ENCODE measurements at regions of chr1 and their contacts with region 1.

Region 1: DNA sequence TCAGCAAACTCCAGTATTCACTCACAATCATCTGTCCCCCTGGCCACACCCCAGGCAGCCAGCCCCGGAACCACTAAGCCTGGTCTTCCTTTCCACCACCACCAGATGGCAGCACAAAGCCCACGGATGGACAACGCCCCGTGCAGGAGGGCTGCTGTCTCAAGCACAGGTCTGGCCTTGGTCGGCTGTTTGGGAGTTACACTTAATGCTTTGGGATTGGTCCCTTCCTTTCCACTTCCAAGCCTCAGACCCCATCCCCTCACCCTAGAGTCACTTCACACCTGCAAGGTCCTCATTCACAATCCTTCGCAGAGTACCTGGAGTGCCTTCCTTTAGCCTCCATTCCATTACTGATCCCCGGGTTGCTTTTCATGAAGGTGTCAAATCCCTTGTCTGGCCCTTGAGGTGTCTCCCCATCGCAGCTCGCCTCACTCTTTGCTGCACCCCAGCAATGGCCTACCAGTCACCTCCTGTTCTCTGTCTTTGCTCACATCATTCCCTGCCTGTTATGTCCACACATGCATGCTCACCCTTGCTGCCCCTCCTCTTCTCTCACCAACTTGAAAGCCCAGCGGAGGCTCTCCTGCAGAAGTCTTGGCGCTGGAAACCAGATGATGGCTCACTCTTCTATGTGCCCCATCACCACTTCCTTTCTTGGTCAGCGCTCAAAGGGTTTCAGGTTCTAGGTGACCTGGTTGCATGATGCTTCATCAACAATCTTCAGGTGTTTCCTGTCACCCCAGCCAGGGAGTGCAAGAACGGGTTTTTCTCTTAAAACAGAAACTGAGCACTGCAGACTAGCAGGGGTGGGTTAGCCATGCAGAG is 24.9 kb upstream of the KCNA2 start:
- DNase-seq: peak; percentile 65 to 88 (median 83)
- ATAC-seq: peak; percentile 66 to 87 (median 84)
- H3K4me3 ChIP-seq: no peak overlapping the region
- H3K27ac ChIP-seq: no peak overlapping the region
- H3K4me1 ChIP-seq: peaks cover 0 to 9% (median 0%) of the 10 kb centered on the region in 3 donors
- H3K27me3 ChIP-seq: no peaks in the 10 kb centered on the region
- CTCF ChIP-seq: peak; percentile 76 to 86 (median 81)

Region 2: GRCh38 chr1:110686188-110686587 is 55.1 kb after region 1 on chr1:
- intact Hi-C with region 1: no loop called
- DNase-seq: no peak
- ATAC-seq: no peak
- H3K4me3 ChIP-seq: no peak overlapping the region
- H3K27ac ChIP-seq: no peak overlapping the region
- H3K4me1 ChIP-seq: no peaks in the 10 kb centered on the region
- H3K27me3 ChIP-seq: peaks cover 0 to 4% (median 2%) of the 10 kb centered on the region in 4 donors
- CTCF ChIP-seq: no peak

Region 3: GRCh38 chr1:110766025-110766647 is 135.1 kb after region 1 on chr1:
- intact Hi-C with region 1: loop called (anchors 5 to 10 kb)
- DNase-seq: no peak
- ATAC-seq: peak in 3 of 4 donors; percentile 80 to 87 (median 83)
- H3K4me3 ChIP-seq: no peak overlapping the region
- H3K27ac ChIP-seq: no peak overlapping the region
- H3K4me1 ChIP-seq: no peaks in the 10 kb centered on the region
- H3K27me3 ChIP-seq: peaks cover 0 to 9% (median 0%) of the 10 kb centered on the region in 4 donors
- CTCF ChIP-seq: peak; percentile 47 to 85 (median 68)

Region 4: GRCh38 chr1:110780600-110781484 is 149.8 kb after region 1 on chr1:
- intact Hi-C with region 1: loop called in 1 of 3 experiments (anchors 5 kb)
- DNase-seq: peak in 5 of 6 donors; percentile 15 to 74 (median 46)
- ATAC-seq: peak; percentile 50 to 86 (median 83)
- H3K4me3 ChIP-seq: no peak overlapping the region
- H3K27ac ChIP-seq: no peak overlapping the region
- H3K4me1 ChIP-seq: no peaks in the 10 kb centered on the region
- H3K27me3 ChIP-seq: no peaks in the 10 kb centered on the region
- CTCF ChIP-seq: peak; percentile 71 to 81 (median 73)